Calu3 (cell line): ENCODE measurements at regions of chr6 and their contacts with region 1.

Region 1: DNA sequence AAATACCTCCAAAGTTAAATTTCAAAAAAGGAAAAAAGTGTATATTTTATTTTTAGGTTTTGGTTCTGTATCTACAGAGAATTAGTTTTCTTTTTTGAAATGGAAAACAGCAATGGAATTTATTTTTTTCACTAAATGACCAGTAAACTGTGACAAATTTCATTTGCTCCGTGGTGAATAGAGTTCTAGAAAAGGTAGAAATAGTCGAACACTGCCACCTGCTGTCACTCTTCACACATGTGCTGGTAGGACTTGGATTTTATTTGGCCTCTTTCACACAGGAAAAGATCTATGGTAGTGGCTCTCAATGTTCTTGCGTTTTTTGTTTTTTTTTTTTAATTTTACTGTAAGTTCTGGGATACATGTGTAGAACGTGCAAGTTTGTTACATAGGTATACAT is 312.5 kb downstream of the EYA4 start:
- DNase-seq: peak; percentile 60
- H3K4me3 Mint-ChIP-seq: no peak overlapping the region
- H3K27ac Mint-ChIP-seq: no peak overlapping the region
- H3K4me1 Mint-ChIP-seq: peaks cover 33% of the 10 kb centered on the region
- H3K27me3 Mint-ChIP-seq: no peaks in the 10 kb centered on the region
- CTCF ChIP-seq: no peak

Region 2: GRCh38 chr6:132820629-132821381 is 732.8 kb before region 1 on chr6:
- CTCF ChIA-PET with region 1: no interaction called
- intact Hi-C with region 1: loop called (anchors 2 kb)
- DNase-seq: no peak
- H3K4me3 Mint-ChIP-seq: no peak overlapping the region
- H3K27ac Mint-ChIP-seq: peak overlapping the region; percentile 85
- H3K4me1 Mint-ChIP-seq: peaks cover 25% of the 10 kb centered on the region
- H3K27me3 Mint-ChIP-seq: no peaks in the 10 kb centered on the region
- CTCF ChIP-seq: no peak

Region 3: GRCh38 chr6:132830334-132830751 is 723.3 kb before region 1 on chr6:
- CTCF ChIA-PET with region 1: interaction called, 9 read pairs
- intact Hi-C with region 1: loop called (anchors 1 kb)
- DNase-seq: peak; percentile 34
- H3K4me3 Mint-ChIP-seq: no peak overlapping the region
- H3K27ac Mint-ChIP-seq: no peak overlapping the region
- H3K4me1 Mint-ChIP-seq: no peaks in the 10 kb centered on the region
- H3K27me3 Mint-ChIP-seq: no peaks in the 10 kb centered on the region
- CTCF ChIP-seq: peak; percentile 48

Region 4: DNA sequence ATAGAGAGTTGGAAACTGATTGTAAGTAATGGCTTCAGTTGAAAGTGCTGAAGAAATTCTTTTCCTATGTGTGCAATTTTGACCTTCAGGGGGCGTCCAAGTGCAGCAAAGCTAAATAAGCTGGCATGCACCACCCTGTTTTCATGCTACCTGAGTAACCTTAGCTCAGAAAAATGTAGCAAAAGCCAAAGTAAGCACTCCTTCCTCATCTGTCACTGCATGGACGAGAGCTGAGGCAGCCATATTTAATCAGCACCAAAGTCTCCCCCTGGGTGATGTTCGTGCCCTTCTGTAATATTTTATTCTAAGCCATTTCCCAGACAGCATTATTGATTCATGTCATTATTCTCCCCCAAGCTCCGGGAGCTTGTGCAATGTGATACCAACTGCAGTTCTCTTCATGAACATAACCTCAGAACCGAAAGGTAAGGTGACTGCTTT is 616.2 kb before region 1 on chr6:
- CTCF ChIA-PET with region 1: interaction called, 3 read pairs
- intact Hi-C with region 1: loop called (anchors 2 kb)
- DNase-seq: peak; percentile 80
- H3K4me3 Mint-ChIP-seq: peak overlapping the region; percentile 48
- H3K27ac Mint-ChIP-seq: no peak overlapping the region
- H3K4me1 Mint-ChIP-seq: peaks cover 8% of the 10 kb centered on the region
- H3K27me3 Mint-ChIP-seq: no peaks in the 10 kb centered on the region
- CTCF ChIP-seq: peak; percentile 58

Region 5: DNA sequence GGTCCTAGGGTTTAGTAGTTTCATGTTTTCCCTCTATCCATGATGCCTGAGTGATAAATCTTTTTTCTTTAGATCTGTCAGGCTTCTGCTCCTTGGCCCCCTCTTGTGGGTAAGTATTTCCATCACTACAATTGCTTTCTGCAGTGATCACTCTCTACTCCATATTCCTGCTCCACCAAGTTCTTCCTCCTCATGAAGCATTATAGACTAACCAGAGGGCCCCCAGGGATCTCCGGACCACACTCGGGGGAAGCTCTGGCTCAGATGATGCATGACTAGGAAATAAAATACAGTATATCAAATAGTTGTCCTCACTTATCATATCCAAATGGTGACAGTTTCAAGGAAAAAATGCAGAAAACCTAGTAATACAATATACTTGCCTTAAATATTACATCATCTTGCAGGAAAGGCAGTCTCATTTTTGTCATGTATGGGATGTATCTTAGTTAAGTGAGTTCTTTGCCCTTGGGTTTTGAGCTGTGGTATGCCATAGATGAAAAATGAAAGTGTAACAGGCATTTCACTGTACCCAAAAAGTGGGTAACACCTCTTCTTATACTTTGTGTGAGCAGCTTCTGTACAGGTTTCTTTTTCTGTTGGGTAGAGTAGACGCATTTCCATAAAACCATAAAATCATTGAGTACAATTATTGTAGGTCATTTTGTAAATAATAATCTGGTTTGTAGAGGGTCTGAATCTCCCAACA is 513.4 kb before region 1 on chr6:
- CTCF ChIA-PET with region 1: no interaction called
- intact Hi-C with region 1: loop called (anchors 5 kb)
- DNase-seq: peak; percentile 61
- H3K4me3 Mint-ChIP-seq: no peak overlapping the region
- H3K27ac Mint-ChIP-seq: no peak overlapping the region
- H3K4me1 Mint-ChIP-seq: peaks cover 16% of the 10 kb centered on the region
- H3K27me3 Mint-ChIP-seq: no peaks in the 10 kb centered on the region
- CTCF ChIP-seq: peak; percentile 57

Region 6: GRCh38 chr6:133184798-133185372 is 368.8 kb before region 1 on chr6:
- CTCF ChIA-PET with region 1: interaction called, 5 read pairs
- intact Hi-C with region 1: loop called (anchors 2 kb)
- DNase-seq: no peak
- H3K4me3 Mint-ChIP-seq: no peak overlapping the region
- H3K27ac Mint-ChIP-seq: no peak overlapping the region
- H3K4me1 Mint-ChIP-seq: peaks cover 9% of the 10 kb centered on the region
- H3K27me3 Mint-ChIP-seq: no peaks in the 10 kb centered on the region
- CTCF ChIP-seq: peak; percentile 59

Region 7: DNA sequence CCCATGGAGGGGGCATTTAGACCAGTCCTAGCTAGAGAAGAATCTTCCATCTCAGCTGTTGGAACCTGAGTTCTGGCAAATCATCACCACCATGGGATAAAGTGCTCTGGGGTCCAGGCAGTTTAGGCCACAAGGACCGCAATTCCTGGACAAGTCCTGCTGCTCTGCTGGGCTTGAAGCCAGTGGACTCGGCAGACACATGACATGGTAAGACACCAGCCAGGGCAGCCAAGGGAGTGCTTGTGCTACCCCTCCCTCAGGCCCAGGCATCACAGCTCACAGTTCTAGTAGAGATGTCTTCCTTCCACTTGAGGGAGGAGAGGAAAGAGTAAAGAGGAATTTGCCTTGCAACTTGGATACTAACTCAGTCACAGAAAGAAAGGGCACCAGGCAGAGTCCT is 66.5 kb before region 1 on chr6:
- CTCF ChIA-PET with region 1: no interaction called
- intact Hi-C with region 1: no loop called
- DNase-seq: no peak
- H3K4me3 Mint-ChIP-seq: no peak overlapping the region
- H3K27ac Mint-ChIP-seq: no peak overlapping the region
- H3K4me1 Mint-ChIP-seq: no peaks in the 10 kb centered on the region
- H3K27me3 Mint-ChIP-seq: no peaks in the 10 kb centered on the region
- CTCF ChIP-seq: no peak

Region 8: DNA sequence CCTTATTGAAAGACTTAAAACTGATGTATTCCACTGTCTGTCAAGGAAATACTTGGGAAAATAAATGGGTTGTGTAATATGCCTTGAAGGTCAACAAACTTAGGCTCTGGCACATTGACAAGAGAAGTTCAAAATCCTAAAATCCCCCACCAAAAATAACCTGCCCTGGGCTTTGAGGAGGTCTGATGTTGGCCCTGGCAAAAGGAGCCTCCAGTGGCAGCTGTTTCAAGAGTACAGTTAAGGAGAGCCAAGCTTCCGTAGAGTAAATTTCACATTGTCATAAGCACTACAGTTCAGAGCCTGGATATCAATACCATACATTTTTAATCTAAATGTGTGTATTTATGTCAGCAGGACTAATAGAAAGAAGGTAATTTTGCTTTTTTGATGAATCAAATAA is 29.8 kb before region 1 on chr6:
- CTCF ChIA-PET with region 1: no interaction called
- intact Hi-C with region 1: no loop called
- DNase-seq: no peak
- H3K4me3 Mint-ChIP-seq: no peak overlapping the region
- H3K27ac Mint-ChIP-seq: no peak overlapping the region
- H3K4me1 Mint-ChIP-seq: no peaks in the 10 kb centered on the region
- H3K27me3 Mint-ChIP-seq: no peaks in the 10 kb centered on the region
- CTCF ChIP-seq: no peak

Region 9: DNA sequence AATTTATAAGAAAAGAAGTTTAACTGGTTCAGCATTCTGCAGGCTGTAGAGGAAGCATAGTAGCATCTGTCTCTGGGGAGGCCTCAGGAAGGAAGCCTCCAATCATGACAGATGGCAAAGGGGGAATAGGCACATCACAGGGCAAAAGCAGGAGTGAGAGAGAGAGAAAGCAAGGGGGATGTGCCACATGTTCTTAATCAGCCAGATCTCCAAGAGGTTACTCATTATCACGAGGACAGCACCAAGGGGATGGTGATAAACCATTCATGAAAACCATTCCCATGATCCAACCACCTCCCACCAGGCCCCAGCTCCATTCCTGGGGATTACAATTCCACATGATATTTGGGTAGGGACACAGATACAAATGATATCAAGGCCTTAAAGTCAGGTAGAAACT is 117.7 kb after region 1 on chr6:
- CTCF ChIA-PET with region 1: no interaction called
- intact Hi-C with region 1: no loop called
- DNase-seq: no peak
- H3K4me3 Mint-ChIP-seq: no peak overlapping the region
- H3K27ac Mint-ChIP-seq: no peak overlapping the region
- H3K4me1 Mint-ChIP-seq: no peaks in the 10 kb centered on the region
- H3K27me3 Mint-ChIP-seq: no peaks in the 10 kb centered on the region
- CTCF ChIP-seq: no peak

Region 10: DNA sequence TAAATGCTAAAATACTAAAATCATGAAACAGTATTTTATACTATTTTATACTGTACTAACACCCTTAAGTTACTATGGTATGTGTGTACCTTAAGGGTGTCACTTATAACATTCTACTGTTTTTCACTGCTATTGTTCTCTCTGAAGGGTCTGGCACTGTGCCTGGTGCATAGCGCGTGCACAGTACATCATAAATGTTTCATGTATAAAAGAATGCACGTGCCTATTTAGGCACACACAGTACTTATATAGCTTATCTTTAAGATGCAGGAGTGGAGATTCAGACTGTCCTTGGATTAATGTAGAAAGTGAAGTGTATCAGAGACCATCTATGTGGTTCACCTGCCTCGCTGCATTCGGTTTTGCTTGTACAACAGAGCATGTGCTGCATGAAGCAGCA is 828.3 kb after region 1 on chr6:
- CTCF ChIA-PET with region 1: no interaction called
- intact Hi-C with region 1: no loop called
- DNase-seq: no peak
- H3K4me3 Mint-ChIP-seq: no peak overlapping the region
- H3K27ac Mint-ChIP-seq: no peak overlapping the region
- H3K4me1 Mint-ChIP-seq: peaks cover 20% of the 10 kb centered on the region
- H3K27me3 Mint-ChIP-seq: no peaks in the 10 kb centered on the region
- CTCF ChIP-seq: no peak